Posterior cingulate gyrus (tissue), 11 donors: ENCODE measurements at regions of chr11 and their contacts with region 1.

Region 1: GRCh38 chr11:125233809-125234208 is 69.3 kb downstream of the PKNOX2 start:
- DNase-seq: peak in 1 of 10 donors; percentile 54

Region 2: GRCh38 chr11:125199915-125200314 is 33.9 kb before region 1 on chr11:
- intact Hi-C with region 1: loop called (anchors 5 kb)
- DNase-seq: peak in 1 of 10 donors; percentile 14